GM12878 (cell line): ENCODE measurements at regions of chr4 and their contacts with region 1.

Region 1: GRCh38 chr4:155787113-155787710 is 28.4 kb downstream of the GUCY1B1 start:
- DNase-seq: peak; percentile 19
- ATAC-seq: peak; percentile 97
- H3K4me3 ChIP-seq: no peak overlapping the region
- H3K27ac ChIP-seq: no peak overlapping the region
- H3K4me1 ChIP-seq: no peaks in the 10 kb centered on the region
- H3K27me3 ChIP-seq: no peaks in the 10 kb centered on the region
- CTCF ChIP-seq: peak; percentile 81 to 98 (median 90)
- EP300 ChIP-seq: no peak
- POLR2A ChIP-seq: no peak
- RAD21 ChIP-seq: peak; percentile 93

Region 2: DNA sequence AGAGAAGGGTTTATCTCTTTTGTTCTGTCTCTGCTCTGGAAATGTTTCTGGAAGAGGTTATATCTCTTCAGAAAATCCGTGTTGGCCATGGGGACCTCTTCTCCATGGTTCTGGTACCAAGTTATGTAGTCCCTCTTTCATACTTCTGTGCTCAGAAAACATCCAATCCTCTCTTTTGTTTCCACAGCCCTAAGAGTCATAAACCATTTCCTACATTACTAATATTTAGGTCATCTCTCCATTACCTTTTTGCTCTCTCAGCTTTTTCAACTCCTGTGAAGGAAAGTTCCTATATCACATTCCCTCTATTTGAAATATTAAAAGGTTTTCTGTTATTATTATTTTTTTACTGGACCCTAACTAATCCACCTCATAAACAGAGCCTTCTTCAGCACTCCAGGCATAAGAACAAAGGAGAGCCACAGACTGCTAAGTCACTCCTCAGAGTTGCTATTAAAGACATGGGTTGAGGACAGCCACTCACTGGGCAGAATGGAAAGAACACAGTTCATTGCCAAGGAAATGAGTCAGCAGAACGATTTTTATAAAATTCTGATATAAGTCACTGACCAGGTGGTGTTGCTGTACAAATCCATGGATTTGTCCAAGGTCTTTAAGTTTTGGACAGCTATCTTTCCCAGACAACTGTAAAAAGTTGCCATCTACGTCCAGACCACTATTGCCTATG is 701.2 kb before region 1 on chr4:
- CTCF ChIA-PET with region 1: no interaction called
- POLR2A ChIA-PET with region 1: no interaction called
- RAD21 ChIA-PET with region 1: no interaction called
- SMC1A ChIA-PET with region 1: no interaction called
- in situ Hi-C with region 1: no loop called
- intact Hi-C with region 1: no loop called
- DNase-seq: no peak
- ATAC-seq: no peak
- H3K4me3 ChIP-seq: no peak overlapping the region
- H3K27ac ChIP-seq: no peak overlapping the region
- H3K4me1 ChIP-seq: no peaks in the 10 kb centered on the region
- H3K27me3 ChIP-seq: no peaks in the 10 kb centered on the region
- CTCF ChIP-seq: no peak
- EP300 ChIP-seq: no peak
- POLR2A ChIP-seq: no peak
- RAD21 ChIP-seq: no peak

Region 3: DNA sequence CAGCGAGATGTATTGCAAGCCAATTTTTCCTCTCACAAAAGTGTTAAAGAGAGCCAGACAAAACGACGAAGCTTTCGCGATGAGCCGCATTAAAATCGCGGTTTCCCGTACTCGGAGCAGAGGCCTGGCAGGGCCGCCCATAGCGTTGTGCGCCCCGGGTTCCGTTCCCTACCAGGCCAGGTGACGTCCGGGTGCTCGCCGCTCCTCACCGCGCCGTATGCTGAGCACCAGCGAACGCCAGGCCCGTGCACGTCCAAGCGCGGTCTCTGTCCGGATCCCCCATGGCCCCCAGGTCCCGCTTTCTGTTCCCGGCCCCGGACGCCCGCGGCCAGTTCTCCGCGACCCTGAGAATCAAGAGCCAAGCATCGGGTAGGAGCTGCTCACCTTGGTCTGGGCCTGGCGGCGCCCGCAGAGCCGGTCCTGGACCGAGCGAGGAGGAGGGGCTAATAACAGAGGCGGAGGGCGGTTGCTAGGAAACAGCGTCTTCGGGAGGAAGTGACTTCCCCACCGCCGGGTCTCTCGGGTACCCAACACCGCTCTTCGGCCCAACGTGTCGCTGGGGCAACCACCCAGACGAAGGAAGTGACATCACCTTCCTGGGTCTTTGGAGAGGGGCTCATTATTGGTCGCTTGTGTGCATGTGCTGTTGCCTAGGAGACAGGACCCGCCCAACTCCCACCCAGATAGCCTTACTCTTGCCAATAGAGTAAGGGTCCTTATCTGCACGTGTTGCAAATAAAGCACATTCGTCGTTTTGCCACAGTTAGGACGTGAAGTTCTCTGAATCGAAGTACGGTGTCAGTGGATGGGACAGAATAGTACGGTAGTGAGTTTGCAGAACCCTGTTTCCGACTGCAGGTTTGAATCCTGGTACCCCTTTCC is 410.6 kb before region 1 on chr4 and contains the start of gene MAP9:
- CTCF ChIA-PET with region 1: interaction called, 12 read pairs
- POLR2A ChIA-PET with region 1: no interaction called
- RAD21 ChIA-PET with region 1: interaction called, 3 read pairs
- SMC1A ChIA-PET with region 1: no interaction called
- in situ Hi-C with region 1: no loop called
- intact Hi-C with region 1: no loop called
- DNase-seq: peak; percentile 78
- ATAC-seq: peak; percentile 97
- H3K4me3 ChIP-seq: peak within 1 kb of the TSS; percentile 55
- H3K27ac ChIP-seq: peak within 1 kb of the TSS; percentile 46
- H3K4me1 ChIP-seq: peaks cover 3% of the 10 kb centered on the region; the same call in 1 of the 2 replicates
- H3K27me3 ChIP-seq: no peaks in the 10 kb centered on the region
- CTCF ChIP-seq: no peak
- EP300 ChIP-seq: no peak
- POLR2A ChIP-seq: peak; percentile 28; the same call in 1 of the 2 replicates
- RAD21 ChIP-seq: no peak
- polyA plus RNA-seq, gene MAP9: 3.2 to 6.1 TPM

Region 4: DNA sequence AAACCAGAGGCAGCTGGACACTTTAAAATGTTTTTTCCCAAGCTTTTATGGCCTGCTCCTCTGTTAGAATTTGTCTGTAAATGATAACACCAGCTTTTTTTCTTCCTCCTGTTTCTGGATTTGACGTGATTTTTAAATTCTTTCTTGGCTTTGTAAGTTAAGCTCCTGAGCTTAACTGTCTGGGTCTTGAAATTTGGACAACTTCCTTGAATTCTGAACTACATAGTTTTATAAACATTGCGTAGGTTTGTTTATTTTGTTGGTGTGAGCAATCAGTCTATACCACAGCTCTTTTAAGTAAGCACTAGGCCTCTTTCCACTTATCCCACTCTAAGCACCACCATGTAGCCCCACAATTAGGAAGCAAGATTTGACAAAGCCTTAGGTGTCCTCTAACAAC is 265.0 kb before region 1 on chr4:
- CTCF ChIA-PET with region 1: interaction called, 75 read pairs
- POLR2A ChIA-PET with region 1: no interaction called
- RAD21 ChIA-PET with region 1: interaction called, 5 read pairs
- SMC1A ChIA-PET with region 1: interaction called, 11 read pairs
- in situ Hi-C with region 1: no loop called
- intact Hi-C with region 1: no loop called
- DNase-seq: no peak
- ATAC-seq: no peak
- H3K4me3 ChIP-seq: no peak overlapping the region
- H3K27ac ChIP-seq: no peak overlapping the region
- H3K4me1 ChIP-seq: no peaks in the 10 kb centered on the region
- H3K27me3 ChIP-seq: peaks cover 0 to 3% of the 10 kb centered on the region in 2 experiments; a peak in 1 of 4 replicates
- CTCF ChIP-seq: no peak
- EP300 ChIP-seq: no peak
- POLR2A ChIP-seq: no peak
- RAD21 ChIP-seq: no peak

Region 5: GRCh38 chr4:155667568-155668511 is 119.4 kb before region 1 on chr4:
- CTCF ChIA-PET with region 1: interaction called, 7 read pairs
- POLR2A ChIA-PET with region 1: interaction called, 4 read pairs
- RAD21 ChIA-PET with region 1: interaction called, 11 read pairs
- SMC1A ChIA-PET with region 1: interaction called, 14 read pairs
- in situ Hi-C with region 1: no loop called
- intact Hi-C with region 1: no loop called
- DNase-seq: no peak
- ATAC-seq: peak; percentile 71
- H3K4me3 ChIP-seq: peak overlapping the region; percentile 41
- H3K27ac ChIP-seq: no peak overlapping the region
- H3K4me1 ChIP-seq: no peaks in the 10 kb centered on the region; the same call in 1 of the 2 replicates
- H3K27me3 ChIP-seq: peaks cover 4 to 21% of the 10 kb centered on the region in 2 experiments; a peak in 3 of 4 replicates
- CTCF ChIP-seq: no peak
- EP300 ChIP-seq: no peak
- POLR2A ChIP-seq: peak; percentile 41; the same call in 1 of the 2 replicates
- RAD21 ChIP-seq: no peak

Region 6: GRCh38 chr4:155758481-155759404 is 28.5 kb before region 1 on chr4 and contains the start of gene GUCY1B1:
- CTCF ChIA-PET with region 1: interaction called, 6 read pairs
- POLR2A ChIA-PET with region 1: interaction called, 5 read pairs
- RAD21 ChIA-PET with region 1: interaction called, 15 read pairs
- SMC1A ChIA-PET with region 1: interaction called, 8 read pairs
- in situ Hi-C with region 1: no loop called
- intact Hi-C with region 1: no loop called
- DNase-seq: peak; percentile 44
- ATAC-seq: peak; percentile 96
- H3K4me3 ChIP-seq: 0 out of 2 replicates have a peak within 1 kb of the TSS, but pooled peaks have one; percentile 44
- H3K27ac ChIP-seq: no peak within 1 kb of the TSS
- H3K4me1 ChIP-seq: no peaks in the 10 kb centered on the region
- H3K27me3 ChIP-seq: peaks cover 0 to 7% of the 10 kb centered on the region in 2 experiments; a peak in 2 of 4 replicates
- CTCF ChIP-seq: peak; percentile 13 to 40 (median 24); a peak in 4 of 6 replicates
- EP300 ChIP-seq: 0 out of 4 replicates have a peak, but pooled peaks of 1 of the 2 experiments have one; percentile 13
- POLR2A ChIP-seq: peak; percentile 61; the same call in 1 of the 2 replicates
- RAD21 ChIP-seq: no peak
- polyA plus RNA-seq, gene GUCY1B1: 0.60 to 1.1 TPM

Region 7: DNA sequence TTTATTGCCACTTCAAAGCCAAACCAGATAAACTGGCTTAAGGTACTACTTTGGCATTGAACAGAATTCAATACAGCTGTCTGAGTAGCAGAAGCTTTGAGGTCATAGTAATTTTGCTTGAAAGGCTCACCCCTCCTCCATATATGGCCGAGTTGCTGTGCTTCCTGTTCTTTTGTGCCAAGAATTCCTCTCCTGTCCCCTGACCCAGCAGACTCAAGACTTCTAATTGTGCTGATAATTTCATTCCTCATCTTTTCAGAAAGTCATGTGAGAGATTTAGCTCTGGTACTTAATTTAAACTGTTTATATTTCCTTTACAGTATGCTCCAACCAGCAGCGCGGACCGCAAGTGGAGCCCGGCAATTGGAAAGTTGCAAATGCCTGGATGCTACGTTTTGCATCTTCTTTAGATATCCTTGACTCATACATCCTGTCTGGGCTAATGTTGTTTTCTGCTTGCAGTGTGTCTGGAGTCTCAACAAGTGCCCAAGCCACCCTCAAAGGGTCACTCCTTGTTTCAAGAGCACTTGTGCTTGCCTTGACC is 811.0 kb after region 1 on chr4:
- CTCF ChIA-PET with region 1: no interaction called
- POLR2A ChIA-PET with region 1: no interaction called
- RAD21 ChIA-PET with region 1: no interaction called
- SMC1A ChIA-PET with region 1: no interaction called
- in situ Hi-C with region 1: no loop called
- intact Hi-C with region 1: no loop called
- DNase-seq: no peak
- ATAC-seq: no peak
- H3K4me3 ChIP-seq: no peak overlapping the region
- H3K27ac ChIP-seq: no peak overlapping the region
- H3K4me1 ChIP-seq: no peaks in the 10 kb centered on the region
- H3K27me3 ChIP-seq: no peaks in the 10 kb centered on the region
- CTCF ChIP-seq: no peak
- EP300 ChIP-seq: no peak
- POLR2A ChIP-seq: no peak
- RAD21 ChIP-seq: no peak